Aorta (tissue), 5 donors: ENCODE measurements at regions of chr3 and their contacts with region 1.

Region 1: GRCh38 chr3:176078684-176079305 is 1118.5 kb downstream of the TBL1XR1 start:
- DNase-seq: no peak
- ATAC-seq: no peak
- H3K4me3 ChIP-seq: no peak overlapping the region
- H3K27ac ChIP-seq: peak overlapping the region in 1 of 2 donors; percentile 76
- H3K4me1 ChIP-seq: peaks cover 0 to 2% of the 10 kb centered on the region in 2 donors
- H3K27me3 ChIP-seq: no peaks in the 10 kb centered on the region

Region 2: DNA sequence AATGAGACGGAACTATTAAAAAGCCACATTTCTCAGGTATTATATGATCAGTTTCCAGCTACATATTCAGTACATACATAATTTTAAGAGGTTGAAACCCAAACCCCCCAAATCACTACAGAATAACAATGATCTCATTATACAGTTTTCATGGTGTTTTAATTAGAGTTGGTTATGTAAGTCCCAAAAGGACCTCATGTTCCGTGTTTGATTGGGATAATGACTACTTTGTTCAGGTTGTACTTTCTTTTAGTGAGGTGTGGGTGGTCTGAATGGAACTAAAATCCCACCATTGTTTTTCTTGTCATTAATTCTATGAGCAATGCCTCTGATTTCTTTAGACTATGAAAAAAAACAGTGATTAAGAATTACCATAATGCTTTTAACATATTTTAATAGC is 314.1 kb before region 1 on chr3:
- intact Hi-C with region 1: no loop called
- DNase-seq: no peak
- ATAC-seq: no peak
- H3K4me3 ChIP-seq: no peak overlapping the region
- H3K27ac ChIP-seq: no peak overlapping the region
- H3K4me1 ChIP-seq: no peaks in the 10 kb centered on the region
- H3K27me3 ChIP-seq: no peaks in the 10 kb centered on the region

Region 3: GRCh38 chr3:176193032-176193730 is 114.4 kb after region 1 on chr3:
- intact Hi-C with region 1: loop called in 1 of 2 experiments (anchors 5 kb)
- DNase-seq: no peak
- ATAC-seq: peak; percentile 33
- H3K4me3 ChIP-seq: no peak overlapping the region
- H3K27ac ChIP-seq: peak overlapping the region; percentile 57 to 79
- H3K4me1 ChIP-seq: no peaks in the 10 kb centered on the region
- H3K27me3 ChIP-seq: no peaks in the 10 kb centered on the region

Region 4: GRCh38 chr3:176296066-176296598 is 217.3 kb after region 1 on chr3:
- intact Hi-C with region 1: no loop called
- DNase-seq: no peak
- ATAC-seq: no peak
- H3K4me3 ChIP-seq: no peak overlapping the region
- H3K27ac ChIP-seq: peak overlapping the region; percentile 55 to 82
- H3K4me1 ChIP-seq: peaks cover 4 to 6% of the 10 kb centered on the region in 2 donors
- H3K27me3 ChIP-seq: no peaks in the 10 kb centered on the region